CD4-positive, alpha-beta memory T cell (primary cell): ENCODE measurements at regions of chr7 and their contacts with region 1.

Region 1: DNA sequence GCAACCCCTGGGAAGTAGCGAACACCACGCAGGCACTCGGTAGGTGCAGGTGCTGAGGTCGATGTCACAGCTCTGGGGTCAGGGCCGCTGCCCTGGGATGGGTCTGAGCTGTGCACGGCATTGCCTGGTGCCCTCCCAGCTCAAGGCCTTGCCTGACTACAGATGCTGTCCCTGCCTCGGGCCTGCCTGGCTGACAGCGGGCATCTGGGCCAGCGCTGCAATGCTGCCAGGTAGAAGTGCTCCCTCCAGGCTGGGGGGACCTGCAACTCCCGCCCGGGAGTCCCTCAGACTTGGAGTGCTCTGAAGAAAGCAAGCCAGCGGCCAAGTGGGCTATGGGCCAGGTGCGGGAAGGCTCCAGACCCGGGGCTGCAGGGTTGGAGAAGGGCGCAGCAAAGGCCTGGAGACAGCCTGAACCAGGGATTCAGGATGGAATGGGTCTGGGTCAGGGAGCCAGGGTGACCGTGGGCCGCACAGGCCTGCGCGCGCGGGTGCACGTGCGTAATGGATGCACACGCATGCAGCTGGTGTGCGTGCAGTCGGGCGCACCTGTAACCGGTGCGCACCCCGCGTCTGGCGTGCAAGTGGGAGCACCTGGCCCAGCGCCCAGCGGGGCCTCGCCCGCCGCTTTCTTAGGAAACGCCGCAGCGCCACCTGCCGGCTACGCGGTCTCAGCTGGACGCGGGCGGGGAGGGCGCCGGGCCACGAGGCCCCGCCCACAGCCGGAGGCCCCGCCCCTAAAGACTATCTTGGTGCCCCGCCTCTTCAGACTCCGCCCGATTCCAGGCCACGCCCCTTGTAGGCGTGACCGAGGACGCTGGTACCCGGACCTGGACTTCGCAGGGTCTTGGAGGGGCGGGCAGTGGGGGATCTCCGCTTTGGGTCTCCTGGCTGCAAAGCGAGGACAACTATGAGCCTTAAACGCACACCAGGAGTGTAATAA is 46.7 kb downstream of the MICALL2 start:
- DNase-seq: peak; percentile 86 to 89 (median 87)
- H3K4me3 ChIP-seq: peak overlapping the region in 1 of 2 donors; percentile 38
- H3K4me3 Mint-ChIP-seq: peak overlapping the region; percentile 49 to 80 (median 68)
- H3K27ac ChIP-seq: no peak overlapping the region
- H3K27ac Mint-ChIP-seq: peak overlapping the region in 5 of 7 donors; percentile 15 to 89 (median 42)
- H3K4me1 ChIP-seq: peaks cover 20% of the 10 kb centered on the region
- H3K4me1 Mint-ChIP-seq: peaks cover 10 to 15% (median 14%) of the 10 kb centered on the region in 4 donors
- H3K27me3 ChIP-seq: no peaks in the 10 kb centered on the region
- H3K27me3 Mint-ChIP-seq: peaks cover 5 to 6% of the 10 kb centered on the region in 2 donors

Region 2: GRCh38 chr7:954330-955238 is 458.0 kb before region 1 on chr7 and contains the start of gene ADAP1:
- CTCF ChIA-PET with region 1: no interaction called
- POLR2A ChIA-PET with region 1: no interaction called
- intact Hi-C with region 1: no loop called
- DNase-seq: peak in 4 of 5 donors; percentile 55 to 64 (median 60)
- H3K4me3 ChIP-seq: no peak within 1 kb of the TSS
- H3K4me3 Mint-ChIP-seq: peak within 1 kb of the TSS; percentile 62 to 80 (median 72)
- H3K27ac ChIP-seq: no peak within 1 kb of the TSS
- H3K27ac Mint-ChIP-seq: peak within 1 kb of the TSS in 2 of 7 donors; percentile 69 to 83
- H3K4me1 ChIP-seq: peaks cover 5% of the 10 kb centered on the region
- H3K4me1 Mint-ChIP-seq: peaks cover 0 to 9% (median 0%) of the 10 kb centered on the region in 4 donors
- H3K27me3 ChIP-seq: no peaks in the 10 kb centered on the region
- H3K27me3 Mint-ChIP-seq: peaks cover 2 to 4% of the 10 kb centered on the region in 2 donors
- total RNA-seq, gene ADAP1: 9.7 to 10.0 TPM

Region 3: GRCh38 chr7:1225441-1226185 is 187.0 kb before region 1 on chr7:
- CTCF ChIA-PET with region 1: interaction called, 3 read pairs
- POLR2A ChIA-PET with region 1: no interaction called
- intact Hi-C with region 1: loop called (anchors 1 kb)
- DNase-seq: peak in 3 of 5 donors; percentile 39 to 41 (median 41)
- H3K4me3 ChIP-seq: no peak overlapping the region
- H3K4me3 Mint-ChIP-seq: peak overlapping the region in 2 of 8 donors; percentile 14 to 41
- H3K27ac ChIP-seq: no peak overlapping the region
- H3K27ac Mint-ChIP-seq: peak overlapping the region in 3 of 7 donors; percentile 68 to 86 (median 83)
- H3K4me1 ChIP-seq: no peaks in the 10 kb centered on the region
- H3K4me1 Mint-ChIP-seq: peaks cover 0 to 6% (median 0%) of the 10 kb centered on the region in 4 donors
- H3K27me3 ChIP-seq: peaks cover 56% of the 10 kb centered on the region
- H3K27me3 Mint-ChIP-seq: peaks cover 43 to 53% of the 10 kb centered on the region in 2 donors

Region 4: GRCh38 chr7:1340461-1341360 is 71.9 kb before region 1 on chr7:
- CTCF ChIA-PET with region 1: no interaction called
- POLR2A ChIA-PET with region 1: no interaction called
- intact Hi-C with region 1: no loop called
- DNase-seq: peak in 1 of 5 donors; percentile 16
- H3K4me3 ChIP-seq: no peak overlapping the region
- H3K4me3 Mint-ChIP-seq: no peak overlapping the region
- H3K27ac ChIP-seq: no peak overlapping the region
- H3K27ac Mint-ChIP-seq: no peak overlapping the region
- H3K4me1 ChIP-seq: no peaks in the 10 kb centered on the region
- H3K4me1 Mint-ChIP-seq: no peaks in the 10 kb centered on the region
- H3K27me3 ChIP-seq: no peaks in the 10 kb centered on the region
- H3K27me3 Mint-ChIP-seq: peaks cover 12 to 13% of the 10 kb centered on the region in 2 donors

Region 5: GRCh38 chr7:1395211-1396070 is 17.2 kb before region 1 on chr7:
- CTCF ChIA-PET with region 1: no interaction called
- POLR2A ChIA-PET with region 1: no interaction called
- intact Hi-C with region 1: no loop called
- DNase-seq: no peak
- H3K4me3 ChIP-seq: no peak overlapping the region
- H3K4me3 Mint-ChIP-seq: no peak overlapping the region
- H3K27ac ChIP-seq: no peak overlapping the region
- H3K27ac Mint-ChIP-seq: no peak overlapping the region
- H3K4me1 ChIP-seq: no peaks in the 10 kb centered on the region
- H3K4me1 Mint-ChIP-seq: no peaks in the 10 kb centered on the region
- H3K27me3 ChIP-seq: peaks cover 6% of the 10 kb centered on the region
- H3K27me3 Mint-ChIP-seq: peaks cover 22 to 25% of the 10 kb centered on the region in 2 donors

Region 6: GRCh38 chr7:1432411-1433082 is 20.0 kb after region 1 on chr7:
- CTCF ChIA-PET with region 1: interaction called, 16 read pairs
- POLR2A ChIA-PET with region 1: interaction called, 3 read pairs
- intact Hi-C with region 1: loop called (anchors 1 kb)
- DNase-seq: peak; percentile 61 to 75 (median 69)
- H3K4me3 ChIP-seq: no peak overlapping the region
- H3K4me3 Mint-ChIP-seq: peak overlapping the region in 1 of 8 donors; percentile 36
- H3K27ac ChIP-seq: no peak overlapping the region
- H3K27ac Mint-ChIP-seq: no peak overlapping the region
- H3K4me1 ChIP-seq: peaks cover 4% of the 10 kb centered on the region
- H3K4me1 Mint-ChIP-seq: peaks cover 2 to 6% (median 4%) of the 10 kb centered on the region in 4 donors
- H3K27me3 ChIP-seq: no peaks in the 10 kb centered on the region
- H3K27me3 Mint-ChIP-seq: peaks cover 0 to 3% of the 10 kb centered on the region in 2 donors

Region 7: DNA sequence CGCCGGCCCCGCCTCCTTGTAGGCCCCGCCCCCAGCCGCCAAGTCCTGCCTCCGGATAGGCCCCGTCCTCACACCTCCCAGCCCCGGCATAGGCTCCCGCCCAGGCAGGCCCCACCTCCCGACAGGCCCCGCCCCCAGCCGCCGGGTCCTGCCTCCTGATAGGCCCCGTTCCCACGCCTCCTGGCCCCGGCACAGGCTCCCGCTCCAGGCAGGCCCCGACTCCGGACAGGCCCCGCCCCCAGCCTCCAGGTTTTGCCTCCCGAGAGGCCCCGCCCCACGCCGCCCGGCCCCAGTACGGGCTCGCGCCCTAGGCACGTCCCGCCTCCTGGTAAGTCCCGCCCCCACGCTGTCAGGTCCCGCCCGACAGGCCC is 46.9 kb after region 1 on chr7:
- CTCF ChIA-PET with region 1: no interaction called
- POLR2A ChIA-PET with region 1: no interaction called
- intact Hi-C with region 1: loop called (anchors 1 kb)
- DNase-seq: peak; percentile 98 to 99 (median 98)
- H3K4me3 ChIP-seq: peak overlapping the region in 1 of 2 donors; percentile 75
- H3K4me3 Mint-ChIP-seq: peak overlapping the region in 7 of 8 donors; percentile 62 to 81 (median 76)
- H3K27ac ChIP-seq: peak overlapping the region; percentile 34
- H3K27ac Mint-ChIP-seq: peak overlapping the region in 2 of 7 donors; percentile 35 to 63
- H3K4me1 ChIP-seq: peaks cover 28% of the 10 kb centered on the region
- H3K4me1 Mint-ChIP-seq: peaks cover 9 to 38% (median 16%) of the 10 kb centered on the region in 4 donors
- H3K27me3 ChIP-seq: no peaks in the 10 kb centered on the region
- H3K27me3 Mint-ChIP-seq: no peaks in the 10 kb centered on the region

Region 8: GRCh38 chr7:1591876-1592275 is 179.3 kb after region 1 on chr7:
- CTCF ChIA-PET with region 1: no interaction called
- POLR2A ChIA-PET with region 1: no interaction called
- intact Hi-C with region 1: no loop called
- DNase-seq: no peak
- H3K4me3 ChIP-seq: no peak overlapping the region
- H3K4me3 Mint-ChIP-seq: peak overlapping the region in 6 of 8 donors; percentile 20 to 82 (median 48)
- H3K27ac ChIP-seq: no peak overlapping the region
- H3K27ac Mint-ChIP-seq: peak overlapping the region in 1 of 7 donors; percentile 68
- H3K4me1 ChIP-seq: peaks cover 22% of the 10 kb centered on the region
- H3K4me1 Mint-ChIP-seq: peaks cover 8 to 23% (median 17%) of the 10 kb centered on the region in 4 donors
- H3K27me3 ChIP-seq: peaks cover 9% of the 10 kb centered on the region
- H3K27me3 Mint-ChIP-seq: peaks cover 36 to 54% of the 10 kb centered on the region in 2 donors